CD8-positive, alpha-beta T cell (primary cell): ENCODE measurements at regions of chr12 and their contacts with region 1.

Region 1: DNA sequence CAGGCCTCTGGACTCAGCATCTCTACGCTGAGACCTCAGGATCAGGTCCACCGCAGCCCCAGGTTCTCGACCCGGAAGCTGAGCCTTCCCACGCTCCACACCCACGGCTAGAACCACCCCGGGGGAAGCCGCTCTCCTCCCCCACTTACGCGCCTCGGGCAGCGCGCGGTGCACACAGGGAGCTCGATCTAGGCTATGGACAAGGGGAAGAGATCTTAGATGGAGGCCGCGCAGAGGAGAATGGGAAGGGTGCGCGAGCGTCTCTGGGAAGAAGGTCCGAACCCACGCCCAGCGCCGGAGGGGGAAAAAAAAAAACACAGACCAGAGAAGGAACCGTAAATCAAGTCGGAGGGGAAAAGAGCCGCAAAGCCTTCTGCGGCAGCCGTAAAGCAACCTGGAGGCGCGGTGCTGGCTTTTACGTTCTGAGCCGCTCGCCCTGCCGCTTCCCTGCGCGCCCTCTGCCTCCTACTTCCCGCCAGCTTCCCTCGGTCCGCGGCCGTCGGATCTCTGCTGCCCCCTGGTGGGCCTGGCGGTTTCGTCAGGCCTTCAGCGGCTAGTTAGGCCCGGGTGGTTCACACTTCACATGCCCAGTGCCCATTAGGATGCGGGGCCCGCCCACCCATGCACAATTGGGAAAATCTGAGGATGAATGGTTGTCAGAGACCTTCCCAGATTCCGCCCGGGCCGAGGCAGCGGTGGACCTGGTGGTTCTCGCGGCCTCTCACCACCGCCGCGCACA is at the start of gene RAD52:
- DNase-seq: peak; percentile 93 to 99 (median 98)
- ATAC-seq: peak; percentile 91
- H3K4me3 ChIP-seq: peak within 1 kb of the TSS; percentile 92 to 98
- H3K4me3 Mint-ChIP-seq: peak within 1 kb of the TSS; percentile 94
- H3K27ac ChIP-seq: peak within 1 kb of the TSS; percentile 70 to 81
- H3K27ac Mint-ChIP-seq: peak within 1 kb of the TSS; percentile 92
- H3K4me1 ChIP-seq: peaks cover 6% of the 10 kb centered on the region
- H3K4me1 Mint-ChIP-seq: peaks cover 26% of the 10 kb centered on the region
- H3K27me3 ChIP-seq: no peaks in the 10 kb centered on the region
- H3K27me3 Mint-ChIP-seq: no peaks in the 10 kb centered on the region
- CTCF ChIP-seq: peak; percentile 94
- total RNA-seq, gene RAD52: 8.1 to 9.6 TPM

Region 2: GRCh38 chr12:304805-305204 is 644.8 kb before region 1 on chr12:
- CTCF ChIA-PET with region 1: no interaction called
- POLR2A ChIA-PET with region 1: no interaction called
- intact Hi-C with region 1: no loop called
- DNase-seq: no peak
- ATAC-seq: no peak
- H3K4me3 ChIP-seq: no peak overlapping the region
- H3K4me3 Mint-ChIP-seq: no peak overlapping the region
- H3K27ac ChIP-seq: no peak overlapping the region
- H3K27ac Mint-ChIP-seq: no peak overlapping the region
- H3K4me1 ChIP-seq: peaks cover 17% of the 10 kb centered on the region
- H3K4me1 Mint-ChIP-seq: peaks cover 50% of the 10 kb centered on the region
- H3K27me3 ChIP-seq: no peaks in the 10 kb centered on the region
- H3K27me3 Mint-ChIP-seq: no peaks in the 10 kb centered on the region
- CTCF ChIP-seq: no peak

Region 3: DNA sequence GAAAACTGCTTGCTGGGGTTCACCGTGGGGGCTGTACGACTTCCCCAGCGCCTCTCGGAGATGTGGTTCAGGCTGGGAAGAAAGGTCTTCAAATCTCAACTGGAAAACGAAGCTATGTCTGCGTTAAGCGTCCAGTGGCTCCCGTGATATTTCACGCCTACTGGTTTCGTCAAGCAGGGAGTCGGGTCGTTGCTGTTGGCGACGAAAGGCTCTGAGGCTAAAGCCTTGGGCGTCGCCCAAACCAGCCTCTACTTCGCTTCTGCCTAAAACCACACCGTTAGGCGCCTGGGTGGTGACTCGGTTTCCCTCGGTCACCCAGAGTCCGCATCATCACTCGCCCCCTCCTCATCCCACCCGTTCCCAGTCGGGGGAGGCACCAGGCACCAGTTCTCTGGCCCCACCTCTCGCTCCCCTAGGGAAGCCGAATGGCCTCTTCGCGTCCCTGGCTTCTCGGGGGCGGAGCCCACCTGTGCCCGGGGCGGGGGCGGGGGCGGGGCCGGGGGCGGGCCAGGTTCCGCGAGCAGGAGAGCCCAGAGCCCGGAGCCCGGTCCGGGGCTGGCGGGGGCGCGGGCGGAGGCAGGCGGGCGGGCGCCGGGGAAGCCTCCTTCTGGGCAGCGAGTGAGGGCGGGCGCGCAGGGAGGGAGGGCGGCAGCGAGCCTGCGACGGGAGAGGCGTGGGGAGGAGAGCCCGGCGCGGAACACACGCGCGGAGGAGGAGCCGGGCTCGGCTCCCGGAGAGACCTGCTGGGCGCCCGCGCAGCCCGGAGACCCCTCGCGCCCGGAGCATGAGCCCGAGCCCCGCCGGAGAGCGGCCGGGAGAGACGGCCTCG is 490.0 kb before region 1 on chr12 and contains the start of gene B4GALNT3:
- CTCF ChIA-PET with region 1: no interaction called
- POLR2A ChIA-PET with region 1: no interaction called
- intact Hi-C with region 1: loop called in 1 of 2 experiments (anchors 5 kb)
- DNase-seq: peak in 7 of 9 experiments; percentile 14 to 65 (median 48)
- ATAC-seq: peak; percentile 62
- H3K4me3 ChIP-seq: peak within 1 kb of the TSS; percentile 51 to 54
- H3K4me3 Mint-ChIP-seq: peak within 1 kb of the TSS; percentile 89
- H3K27ac ChIP-seq: no peak within 1 kb of the TSS
- H3K27ac Mint-ChIP-seq: peak within 1 kb of the TSS; percentile 25
- H3K4me1 ChIP-seq: peaks cover 10% of the 10 kb centered on the region
- H3K4me1 Mint-ChIP-seq: peaks cover 26% of the 10 kb centered on the region
- H3K27me3 ChIP-seq: peaks cover 0 to 3% of the 10 kb centered on the region in 2 experiments
- H3K27me3 Mint-ChIP-seq: peaks cover 29% of the 10 kb centered on the region
- CTCF ChIP-seq: no peak
- total RNA-seq, gene B4GALNT3: 1.1 to 1.2 TPM

Region 4: DNA sequence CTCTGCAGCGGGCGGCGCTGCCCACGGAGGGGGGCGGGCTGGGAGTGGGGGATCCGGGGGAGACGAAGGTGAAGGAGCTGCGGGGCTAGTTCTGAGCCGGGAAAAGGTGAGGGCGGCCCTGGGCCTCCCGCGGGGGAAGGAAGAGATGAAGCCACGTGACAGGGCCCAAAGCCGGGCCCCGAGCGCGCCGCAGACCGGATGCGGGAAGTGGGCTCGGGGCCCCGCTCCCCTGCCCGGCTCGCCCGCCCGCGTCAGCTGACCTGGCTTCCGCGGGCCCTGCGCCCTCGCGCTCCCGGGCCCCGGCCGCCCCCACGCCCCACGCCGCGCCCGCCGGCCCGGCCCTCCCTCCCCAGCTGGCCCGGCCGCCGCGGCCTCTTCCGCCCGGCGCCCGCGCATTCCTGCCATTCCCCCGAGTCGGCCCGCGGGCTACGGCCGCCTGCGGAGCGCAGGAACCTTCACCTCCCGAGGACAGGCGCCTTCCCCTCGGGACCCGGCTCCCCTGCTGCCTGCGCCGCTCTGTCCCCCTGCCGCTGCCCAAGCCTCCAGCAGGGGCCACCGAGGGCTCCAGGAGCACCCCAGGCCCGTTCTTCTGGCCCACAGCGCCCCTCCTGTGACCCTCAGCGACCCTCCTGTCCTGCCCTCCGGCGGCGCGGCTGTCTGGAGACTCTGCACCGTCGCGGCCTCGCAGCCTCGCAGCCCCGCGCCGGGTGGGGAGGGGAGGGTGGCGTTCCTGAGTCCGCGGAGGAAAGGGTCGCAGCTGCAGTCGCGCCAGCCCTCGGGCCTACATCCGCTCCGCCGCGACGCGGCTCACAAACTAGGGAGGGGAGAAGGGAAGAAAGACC is 306.8 kb before region 1 on chr12:
- CTCF ChIA-PET with region 1: no interaction called
- POLR2A ChIA-PET with region 1: no interaction called
- intact Hi-C with region 1: loop called in 1 of 2 experiments (anchors 10 kb)
- DNase-seq: peak; percentile 39 to 91 (median 77)
- ATAC-seq: peak; percentile 75
- H3K4me3 ChIP-seq: peak overlapping the region; percentile 62 to 70
- H3K4me3 Mint-ChIP-seq: peak overlapping the region; percentile 89
- H3K27ac ChIP-seq: peak overlapping the region; percentile 72 to 88
- H3K27ac Mint-ChIP-seq: peak overlapping the region; percentile 97
- H3K4me1 ChIP-seq: peaks cover 36% of the 10 kb centered on the region
- H3K4me1 Mint-ChIP-seq: peaks cover 54% of the 10 kb centered on the region
- H3K27me3 ChIP-seq: no peaks in the 10 kb centered on the region
- H3K27me3 Mint-ChIP-seq: no peaks in the 10 kb centered on the region
- CTCF ChIP-seq: peak; percentile 34

Region 5: GRCh38 chr12:823028-823698 is 126.5 kb before region 1 on chr12:
- CTCF ChIA-PET with region 1: no interaction called
- POLR2A ChIA-PET with region 1: no interaction called
- intact Hi-C with region 1: loop called in 1 of 2 experiments (anchors 1 kb)
- DNase-seq: no peak
- ATAC-seq: no peak
- H3K4me3 ChIP-seq: no peak overlapping the region
- H3K4me3 Mint-ChIP-seq: no peak overlapping the region
- H3K27ac ChIP-seq: no peak overlapping the region
- H3K27ac Mint-ChIP-seq: peak overlapping the region; percentile 1
- H3K4me1 ChIP-seq: no peaks in the 10 kb centered on the region
- H3K4me1 Mint-ChIP-seq: peaks cover 62% of the 10 kb centered on the region
- H3K27me3 ChIP-seq: no peaks in the 10 kb centered on the region
- H3K27me3 Mint-ChIP-seq: no peaks in the 10 kb centered on the region
- CTCF ChIP-seq: no peak

Region 6: GRCh38 chr12:938810-939209 is 10.8 kb before region 1 on chr12:
- CTCF ChIA-PET with region 1: interaction called, 11 read pairs
- POLR2A ChIA-PET with region 1: interaction called, 4 read pairs
- intact Hi-C with region 1: no loop called
- DNase-seq: no peak
- ATAC-seq: no peak
- H3K4me3 ChIP-seq: no peak overlapping the region
- H3K4me3 Mint-ChIP-seq: no peak overlapping the region
- H3K27ac ChIP-seq: no peak overlapping the region
- H3K27ac Mint-ChIP-seq: no peak overlapping the region
- H3K4me1 ChIP-seq: peaks cover 4% of the 10 kb centered on the region
- H3K4me1 Mint-ChIP-seq: peaks cover 20% of the 10 kb centered on the region
- H3K27me3 ChIP-seq: no peaks in the 10 kb centered on the region
- H3K27me3 Mint-ChIP-seq: no peaks in the 10 kb centered on the region
- CTCF ChIP-seq: no peak

Region 7: DNA sequence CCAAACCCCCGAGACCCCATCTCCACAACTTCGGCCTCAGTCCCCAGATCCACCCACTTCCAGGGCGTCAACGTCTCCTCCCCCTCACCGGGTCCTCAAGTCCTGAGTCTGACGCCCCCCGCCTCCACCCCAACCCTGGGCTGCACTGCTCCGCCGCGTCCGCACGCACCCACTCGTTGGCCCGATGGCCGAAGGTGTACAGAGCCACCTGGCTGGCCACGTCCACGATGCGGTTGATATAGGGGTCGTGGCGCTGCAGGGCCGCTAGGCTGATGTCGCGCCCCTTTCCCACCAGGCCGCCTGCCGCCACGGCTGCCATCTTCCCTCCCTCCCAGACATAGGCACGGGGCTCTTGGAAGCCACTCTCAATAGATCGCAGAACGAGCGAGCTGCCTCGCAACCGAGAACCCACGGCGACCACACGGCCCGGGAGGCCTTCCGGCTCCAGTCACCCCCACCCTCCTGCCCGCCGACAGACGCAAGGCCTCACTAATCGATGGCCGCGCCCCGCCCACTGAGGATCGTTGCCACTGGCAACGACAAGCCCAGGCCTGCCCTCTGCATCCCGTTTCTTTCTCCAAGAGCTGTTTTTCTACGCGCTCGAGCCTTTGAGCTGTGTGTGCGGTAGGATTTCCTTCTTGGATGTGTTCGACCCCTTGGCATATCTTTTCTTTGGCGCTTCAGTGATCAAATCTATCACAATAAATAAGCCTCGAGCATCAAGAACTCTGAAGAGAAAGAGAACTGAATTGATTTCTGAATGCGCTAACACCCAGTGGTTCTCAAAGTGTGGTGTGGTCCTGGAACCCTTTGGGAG is 1054.7 kb after region 1 on chr12 and contains the start of gene DCP1B:
- CTCF ChIA-PET with region 1: no interaction called
- POLR2A ChIA-PET with region 1: no interaction called
- intact Hi-C with region 1: loop called in 1 of 2 experiments (anchors 2 kb)
- DNase-seq: peak; percentile 83 to 98 (median 92)
- ATAC-seq: peak; percentile 94
- H3K4me3 ChIP-seq: peak within 1 kb of the TSS; percentile 65 to 99
- H3K4me3 Mint-ChIP-seq: peak within 1 kb of the TSS; percentile 98
- H3K27ac ChIP-seq: peak within 1 kb of the TSS; percentile 71 to 92
- H3K27ac Mint-ChIP-seq: peak within 1 kb of the TSS; percentile 99
- H3K4me1 ChIP-seq: peaks cover 19% of the 10 kb centered on the region
- H3K4me1 Mint-ChIP-seq: peaks cover 37% of the 10 kb centered on the region
- H3K27me3 ChIP-seq: peaks cover 0 to 2% of the 10 kb centered on the region in 2 experiments
- H3K27me3 Mint-ChIP-seq: no peaks in the 10 kb centered on the region
- CTCF ChIP-seq: no peak
- total RNA-seq, gene DCP1B: 3.0 TPM